GM12878 (cell line): ENCODE measurements at regions of chrX and their contacts with region 1.

Region 1: GRCh38 chrX:68196939-68197791 is 236.1 kb downstream of the OPHN1 start:
- DNase-seq: no peak
- ATAC-seq: peak; percentile 84
- H3K4me3 ChIP-seq: no peak overlapping the region
- H3K27ac ChIP-seq: no peak overlapping the region
- H3K4me1 ChIP-seq: no peaks in the 10 kb centered on the region
- H3K27me3 ChIP-seq: no peaks in the 10 kb centered on the region
- CTCF ChIP-seq: peak; percentile 66 to 80 (median 78)
- EP300 ChIP-seq: no peak
- POLR2A ChIP-seq: no peak
- RAD21 ChIP-seq: peak; percentile 94

Region 2: DNA sequence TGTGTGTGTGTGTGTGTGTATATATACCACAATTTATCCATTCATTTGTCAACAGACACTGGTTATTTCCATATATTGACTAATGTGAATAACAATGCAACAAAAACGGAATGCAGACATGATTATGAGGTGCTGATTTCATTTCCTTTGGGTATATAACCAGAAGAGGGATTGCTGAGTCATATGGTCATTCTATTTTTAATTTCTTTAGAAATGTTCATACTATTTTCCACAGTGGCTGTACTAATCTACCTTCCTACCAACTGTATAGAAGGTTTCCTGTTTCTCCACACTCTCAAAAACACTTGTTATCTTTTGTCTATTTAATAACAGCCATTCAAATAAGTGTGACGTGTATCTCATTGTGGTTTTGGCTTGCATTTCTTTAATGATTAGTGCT is 33.7 kb before region 1 on chrX:
- CTCF ChIA-PET with region 1: no interaction called
- POLR2A ChIA-PET with region 1: no interaction called
- RAD21 ChIA-PET with region 1: no interaction called
- SMC1A ChIA-PET with region 1: no interaction called
- in situ Hi-C with region 1: no loop called
- intact Hi-C with region 1: no loop called
- DNase-seq: no peak
- ATAC-seq: no peak
- H3K4me3 ChIP-seq: no peak overlapping the region
- H3K27ac ChIP-seq: no peak overlapping the region
- H3K4me1 ChIP-seq: no peaks in the 10 kb centered on the region
- H3K27me3 ChIP-seq: no peaks in the 10 kb centered on the region
- CTCF ChIP-seq: no peak
- EP300 ChIP-seq: no peak
- POLR2A ChIP-seq: no peak
- RAD21 ChIP-seq: no peak

Region 3: DNA sequence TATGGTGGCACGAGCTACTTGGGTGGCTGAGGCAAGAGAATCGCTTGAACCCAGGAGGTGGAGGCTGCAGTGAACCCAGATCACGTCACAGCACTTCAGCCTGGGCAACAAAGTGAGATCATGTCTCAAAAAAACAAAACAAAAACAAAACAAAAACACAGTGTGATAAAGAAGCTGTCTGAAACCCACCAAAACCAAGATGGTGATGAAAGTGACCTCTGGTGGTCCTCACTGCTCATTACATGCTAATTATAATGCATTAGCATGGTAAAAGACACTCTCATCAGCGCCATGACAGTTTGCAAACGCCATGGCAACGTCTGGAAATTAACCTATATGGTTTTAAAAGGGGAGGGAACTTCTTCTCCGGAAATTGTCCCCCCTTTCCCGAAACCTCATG is 265.5 kb after region 1 on chrX:
- CTCF ChIA-PET with region 1: interaction called, 6 read pairs
- POLR2A ChIA-PET with region 1: no interaction called
- RAD21 ChIA-PET with region 1: no interaction called
- SMC1A ChIA-PET with region 1: interaction called, 3 read pairs
- in situ Hi-C with region 1: loop called (anchors 10 kb)
- intact Hi-C with region 1: loop called (anchors 1 kb)
- DNase-seq: no peak
- ATAC-seq: peak; percentile 72
- H3K4me3 ChIP-seq: no peak overlapping the region
- H3K27ac ChIP-seq: no peak overlapping the region
- H3K4me1 ChIP-seq: no peaks in the 10 kb centered on the region
- H3K27me3 ChIP-seq: no peaks in the 10 kb centered on the region
- CTCF ChIP-seq: peak; percentile 19 to 62 (median 34); a peak in 4 of 6 replicates
- EP300 ChIP-seq: no peak
- POLR2A ChIP-seq: no peak
- RAD21 ChIP-seq: peak; percentile 27; the same call in 1 of the 2 replicates

Region 4: DNA sequence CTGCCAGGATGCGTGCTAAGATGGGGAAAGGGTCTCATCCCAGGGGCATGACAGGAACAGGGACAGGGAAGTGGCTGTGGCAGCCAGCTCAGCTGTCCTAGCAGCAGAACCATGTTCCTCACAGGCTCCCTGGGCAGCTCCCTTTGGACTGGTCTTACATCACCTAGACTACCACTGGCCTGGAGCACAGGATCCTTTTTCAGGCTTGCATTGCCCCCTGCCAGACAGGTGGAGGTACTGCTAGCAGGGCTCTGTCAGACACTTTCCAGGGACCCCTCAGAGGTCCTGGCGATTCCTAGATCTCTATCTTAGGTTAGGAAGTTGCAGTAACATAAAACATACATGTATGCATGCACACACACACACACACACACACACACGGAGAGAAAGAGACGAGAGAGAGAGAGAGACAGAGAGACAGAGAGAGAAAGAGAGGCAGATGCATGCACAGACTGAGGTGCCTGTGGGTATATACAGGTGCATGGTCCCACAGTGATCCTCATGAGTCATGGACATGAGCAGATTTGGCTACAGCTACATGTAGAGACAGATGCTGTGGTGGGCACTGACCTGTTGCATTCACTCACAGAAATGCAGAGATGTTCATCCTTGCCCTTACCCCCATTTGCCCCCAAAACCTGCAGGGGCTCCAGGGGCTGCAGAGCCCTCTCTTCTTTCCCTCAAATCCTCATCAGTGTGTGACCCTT is 513.9 kb after region 1 on chrX:
- CTCF ChIA-PET with region 1: interaction called, 15 read pairs
- POLR2A ChIA-PET with region 1: no interaction called
- RAD21 ChIA-PET with region 1: interaction called, 12 read pairs
- SMC1A ChIA-PET with region 1: interaction called, 11 read pairs
- in situ Hi-C with region 1: loop called (anchors 5 kb)
- intact Hi-C with region 1: loop called (anchors 5 kb)
- DNase-seq: no peak
- ATAC-seq: peak; percentile 75
- H3K4me3 ChIP-seq: no peak overlapping the region
- H3K27ac ChIP-seq: no peak overlapping the region
- H3K4me1 ChIP-seq: no peaks in the 10 kb centered on the region
- H3K27me3 ChIP-seq: no peaks in the 10 kb centered on the region
- CTCF ChIP-seq: peak; percentile 49 to 53 (median 49); a peak in 5 of 6 replicates
- EP300 ChIP-seq: no peak
- POLR2A ChIP-seq: no peak
- RAD21 ChIP-seq: peak; percentile 76

Region 5: GRCh38 chrX:69285881-69286564 is 1088.9 kb after region 1 on chrX:
- CTCF ChIA-PET with region 1: interaction called, 3 read pairs
- POLR2A ChIA-PET with region 1: no interaction called
- RAD21 ChIA-PET with region 1: no interaction called
- SMC1A ChIA-PET with region 1: no interaction called
- in situ Hi-C with region 1: loop called (anchors 25 kb)
- intact Hi-C with region 1: no loop called
- DNase-seq: no peak
- ATAC-seq: peak; percentile 95
- H3K4me3 ChIP-seq: no peak overlapping the region
- H3K27ac ChIP-seq: no peak overlapping the region
- H3K4me1 ChIP-seq: no peaks in the 10 kb centered on the region
- H3K27me3 ChIP-seq: no peaks in the 10 kb centered on the region
- CTCF ChIP-seq: peak; percentile 82 to 98 (median 84)
- EP300 ChIP-seq: no peak
- POLR2A ChIP-seq: no peak
- RAD21 ChIP-seq: peak; percentile 84